Activated T-helper 1 cell treated with anti-CD3 and anti-CD28 coated beads, Interleukin-12 subunit alpha, Interleukin-12 subunit beta, Interleukin-2, Interleukin-4 antibody, amounts not matched to agents 30 ng/mL and 10 ng/mL and 1 ng/mL, durations not matched to agents 14 hours and 24 hours and 36 hours (primary cell): ENCODE measurements at regions of chr4 and their contacts with region 1.

Region 1: GRCh38 chr4:781493-782216 is 44.3 kb downstream of the CPLX1 start:
- DNase-seq: peak; percentile 100
- H3K4me3 Mint-ChIP-seq: peak overlapping the region; percentile 88
- H3K27ac Mint-ChIP-seq: peak overlapping the region; percentile 90
- H3K4me1 Mint-ChIP-seq: peaks cover 37% of the 10 kb centered on the region
- H3K27me3 Mint-ChIP-seq: peaks cover 9% of the 10 kb centered on the region

Region 2: DNA sequence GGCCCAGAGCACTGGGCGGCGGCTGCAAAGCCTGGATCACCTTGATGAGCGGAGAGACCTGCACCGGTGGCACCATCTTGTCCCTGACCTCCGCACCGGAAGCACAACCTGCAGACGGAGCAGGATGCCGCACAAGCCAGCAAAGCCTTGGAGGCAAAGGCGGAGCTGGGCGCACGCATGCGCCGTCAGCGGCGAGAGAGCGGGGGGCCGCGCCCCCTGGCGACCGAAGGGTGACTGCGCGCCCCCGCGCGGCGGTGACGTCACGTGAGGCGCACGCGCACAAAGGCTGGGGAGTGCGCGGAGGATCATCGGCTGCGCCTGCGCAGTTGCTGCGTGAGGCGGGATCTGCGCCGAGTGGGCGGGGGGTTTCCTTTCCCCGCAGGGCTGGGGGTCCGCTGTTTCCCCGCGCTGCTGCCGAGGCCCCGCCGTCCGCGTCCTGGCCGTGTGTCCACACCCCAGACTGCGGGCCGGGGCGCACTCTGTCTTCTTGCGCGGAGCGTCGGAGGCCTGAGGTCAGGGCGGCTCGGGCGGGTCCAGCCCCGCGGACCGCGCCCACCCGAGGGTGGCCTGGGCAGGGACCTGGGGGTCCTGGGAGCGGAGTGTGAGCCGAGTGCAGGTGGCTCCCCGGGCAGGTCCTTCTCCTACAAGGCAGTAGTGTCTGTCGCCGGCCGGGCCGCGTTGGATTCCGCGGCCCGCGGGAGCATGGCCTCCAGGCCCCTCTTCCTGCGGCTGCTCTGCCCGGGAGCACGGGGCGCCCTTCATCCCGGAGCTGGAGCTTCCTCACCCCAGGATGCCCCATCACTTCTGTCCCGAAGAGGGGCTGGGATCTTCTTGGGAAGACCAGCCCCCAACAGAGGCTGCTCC is 107.3 kb before region 1 on chr4 and contains the starts of genes ATP5ME and MYL5:
- intact Hi-C with region 1: loop called (anchors 2 kb)
- DNase-seq: peak; percentile 97
- H3K4me3 Mint-ChIP-seq: peak within 1 kb of the TSS; percentile 88
- H3K27ac Mint-ChIP-seq: peak within 1 kb of the TSS; percentile 90
- H3K4me1 Mint-ChIP-seq: peaks cover 7% of the 10 kb centered on the region
- H3K27me3 Mint-ChIP-seq: peaks cover 1% of the 10 kb centered on the region
- total RNA-seq, gene ATP5ME: 217 and 224 TPM in 2 replicates
- total RNA-seq, gene MYL5: 29.7 and 35.0 TPM in 2 replicates

Region 3: GRCh38 chr4:705278-706082 is 76.2 kb before region 1 on chr4 and contains the start of gene PCGF3:
- intact Hi-C with region 1: loop called (anchors 1 kb)
- DNase-seq: peak; percentile 95
- H3K4me3 Mint-ChIP-seq: peak within 1 kb of the TSS; percentile 83
- H3K27ac Mint-ChIP-seq: peak within 1 kb of the TSS; percentile 83
- H3K4me1 Mint-ChIP-seq: peaks cover 27% of the 10 kb centered on the region
- H3K27me3 Mint-ChIP-seq: peaks cover 2% of the 10 kb centered on the region
- total RNA-seq, gene PCGF3: 30.4 and 31.0 TPM in 2 replicates

Region 4: GRCh38 chr4:825238-825835 is 43.7 kb after region 1 on chr4:
- intact Hi-C with region 1: loop called (anchors 5 kb)
- DNase-seq: no peak
- H3K4me3 Mint-ChIP-seq: no peak overlapping the region
- H3K27ac Mint-ChIP-seq: no peak overlapping the region
- H3K4me1 Mint-ChIP-seq: no peaks in the 10 kb centered on the region
- H3K27me3 Mint-ChIP-seq: peaks cover 33% of the 10 kb centered on the region

Region 5: GRCh38 chr4:931960-932712 is 150.5 kb after region 1 on chr4 and contains the starts of genes GAK and TMEM175:
- intact Hi-C with region 1: loop called (anchors 1 kb)
- DNase-seq: peak; percentile 99
- H3K4me3 Mint-ChIP-seq: peak within 1 kb of the TSS; percentile 97
- H3K27ac Mint-ChIP-seq: peak within 1 kb of the TSS; percentile 90
- H3K4me1 Mint-ChIP-seq: peaks cover 34% of the 10 kb centered on the region
- H3K27me3 Mint-ChIP-seq: no peaks in the 10 kb centered on the region
- total RNA-seq, gene GAK: 146 and 149 TPM in 2 replicates
- total RNA-seq, gene TMEM175: 15.4 and 16.2 TPM in 2 replicates

Region 6: GRCh38 chr4:986879-987623 is 205.4 kb after region 1 on chr4 and contains the start of gene IDUA:
- intact Hi-C with region 1: loop called (anchors 1 kb)
- DNase-seq: peak; percentile 84
- H3K4me3 Mint-ChIP-seq: peak within 1 kb of the TSS; percentile 88
- H3K27ac Mint-ChIP-seq: peak within 1 kb of the TSS; percentile 81
- H3K4me1 Mint-ChIP-seq: peaks cover 17% of the 10 kb centered on the region
- H3K27me3 Mint-ChIP-seq: no peaks in the 10 kb centered on the region
- total RNA-seq, gene IDUA: 33.8 and 34.3 TPM in 2 replicates

Region 7: DNA sequence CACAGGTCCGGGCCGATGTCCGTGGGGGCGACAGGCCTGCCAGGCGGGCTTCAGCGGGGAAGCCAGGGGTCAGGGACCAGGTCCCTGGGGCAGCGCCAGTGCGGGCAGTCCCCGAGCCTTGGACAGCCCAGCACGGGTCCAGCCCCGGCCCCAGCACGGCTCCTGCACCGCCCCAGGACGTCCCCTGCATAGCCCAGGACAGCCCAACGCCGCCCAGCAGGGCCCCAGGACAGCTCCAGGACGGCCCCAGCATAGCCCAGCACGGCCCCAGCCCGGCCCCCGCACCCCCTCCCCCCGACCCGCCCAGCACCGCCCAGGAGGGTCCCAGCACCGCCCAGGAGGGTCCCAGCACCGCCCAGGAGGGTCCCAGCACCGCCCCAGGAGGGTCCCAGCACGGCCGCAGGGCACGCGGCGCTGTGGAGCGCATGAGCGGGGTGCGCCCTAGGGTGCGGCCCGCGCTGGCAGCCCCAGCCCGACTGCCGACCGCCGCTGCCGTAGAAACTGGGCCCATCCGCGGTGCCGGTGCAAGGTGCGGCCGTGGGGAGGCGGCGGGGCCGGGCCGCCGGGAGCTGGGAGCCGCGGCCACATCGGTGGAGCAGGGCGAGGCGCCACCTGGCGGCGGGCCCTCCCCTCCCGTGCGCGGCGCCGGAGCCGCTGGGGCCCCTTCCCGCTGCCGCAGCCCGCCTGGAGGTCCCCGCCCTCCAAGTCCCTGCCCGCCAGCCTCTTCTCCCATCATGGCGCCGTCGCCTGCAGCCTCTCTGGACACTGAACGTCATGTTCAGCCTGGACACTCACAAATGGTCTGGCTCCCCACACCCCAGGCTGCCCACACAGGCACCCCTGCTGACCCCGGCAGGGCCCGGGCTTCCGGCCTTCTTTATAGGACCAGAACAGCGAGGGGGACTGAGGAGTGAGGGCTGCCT is 731.3 kb after region 1 on chr4:
- intact Hi-C with region 1: no loop called
- DNase-seq: peak; percentile 27
- H3K4me3 Mint-ChIP-seq: no peak overlapping the region
- H3K27ac Mint-ChIP-seq: no peak overlapping the region
- H3K4me1 Mint-ChIP-seq: no peaks in the 10 kb centered on the region
- H3K27me3 Mint-ChIP-seq: no peaks in the 10 kb centered on the region

Region 8: GRCh38 chr4:1712216-1713002 is 930.8 kb after region 1 on chr4 and contains the start of gene SLBP:
- intact Hi-C with region 1: loop called (anchors 5 kb)
- DNase-seq: peak; percentile 99
- H3K4me3 Mint-ChIP-seq: peak within 1 kb of the TSS; percentile 99
- H3K27ac Mint-ChIP-seq: peak within 1 kb of the TSS; percentile 89
- H3K4me1 Mint-ChIP-seq: peaks cover 59% of the 10 kb centered on the region
- H3K27me3 Mint-ChIP-seq: no peaks in the 10 kb centered on the region
- total RNA-seq, gene SLBP: 136 and 140 TPM in 2 replicates